Dendritic cell treated with granulocyte-macrophage colony-stimulating factor and Interleukin-4, amounts not matched to agents 40 ng/mL and 50 ng/mL, for 4 days (primary cell): ENCODE measurements at regions of chr2 and their contacts with region 1.

Region 1: GRCh38 chr2:239222312-239222660 is 178.5 kb downstream of the HDAC4 start:
- H3K4me3 Mint-ChIP-seq: peak overlapping the region; percentile 61
- H3K27ac Mint-ChIP-seq: peak overlapping the region; percentile 92
- H3K4me1 Mint-ChIP-seq: peaks cover 86% of the 10 kb centered on the region
- H3K27me3 Mint-ChIP-seq: no peaks in the 10 kb centered on the region

Region 2: DNA sequence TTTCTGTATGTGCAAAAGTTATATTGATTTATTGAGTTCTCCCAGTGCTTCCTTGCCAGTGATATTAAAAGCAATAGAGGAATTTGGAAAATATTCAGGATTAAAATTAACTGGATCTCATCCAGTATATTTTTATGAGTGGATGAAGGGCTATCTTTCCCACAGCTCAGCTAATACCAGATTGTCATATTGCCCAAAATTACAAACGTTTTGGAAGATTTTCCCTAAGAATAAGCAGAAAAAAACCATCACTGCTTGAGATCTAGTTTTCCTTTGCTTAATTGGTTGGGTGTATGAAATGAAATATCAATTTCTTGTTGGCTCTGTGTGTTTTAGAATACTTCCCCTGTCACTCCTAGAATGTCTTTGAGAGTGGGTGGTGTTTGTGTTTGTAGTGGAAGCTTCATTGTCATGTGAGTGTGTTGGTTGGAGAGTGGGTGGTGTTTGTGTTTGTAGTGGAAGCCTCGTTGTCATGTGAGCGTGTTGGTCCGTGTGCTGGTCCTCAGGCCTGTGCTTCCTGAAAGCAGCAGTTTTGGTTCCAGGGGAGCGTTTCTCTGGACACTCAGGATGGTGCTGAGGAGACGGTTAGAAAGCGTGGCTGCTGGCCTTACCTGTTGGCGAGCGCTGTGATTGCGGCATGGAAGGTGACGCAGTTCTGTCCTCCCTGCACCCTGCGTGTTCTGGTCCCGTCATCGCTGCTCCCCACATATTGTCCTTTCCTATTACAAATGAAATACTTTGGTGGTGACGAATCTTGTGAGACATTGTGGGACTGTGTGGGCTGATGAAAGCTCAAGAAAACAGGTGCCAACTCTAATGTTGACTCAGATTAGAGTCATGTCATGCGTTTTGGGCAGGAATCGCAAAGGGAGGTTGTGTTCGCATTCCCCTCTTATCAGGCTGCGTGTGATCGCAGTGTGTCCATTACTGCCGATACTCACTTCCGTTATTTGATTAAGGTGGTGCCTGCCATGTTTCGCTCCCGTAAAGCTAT is 783.1 kb before region 1 on chr2:
- intact Hi-C with region 1: no loop called
- H3K4me3 Mint-ChIP-seq: no peak overlapping the region
- H3K27ac Mint-ChIP-seq: peak overlapping the region; percentile 10
- H3K4me1 Mint-ChIP-seq: peaks cover 38% of the 10 kb centered on the region
- H3K27me3 Mint-ChIP-seq: no peaks in the 10 kb centered on the region

Region 3: DNA sequence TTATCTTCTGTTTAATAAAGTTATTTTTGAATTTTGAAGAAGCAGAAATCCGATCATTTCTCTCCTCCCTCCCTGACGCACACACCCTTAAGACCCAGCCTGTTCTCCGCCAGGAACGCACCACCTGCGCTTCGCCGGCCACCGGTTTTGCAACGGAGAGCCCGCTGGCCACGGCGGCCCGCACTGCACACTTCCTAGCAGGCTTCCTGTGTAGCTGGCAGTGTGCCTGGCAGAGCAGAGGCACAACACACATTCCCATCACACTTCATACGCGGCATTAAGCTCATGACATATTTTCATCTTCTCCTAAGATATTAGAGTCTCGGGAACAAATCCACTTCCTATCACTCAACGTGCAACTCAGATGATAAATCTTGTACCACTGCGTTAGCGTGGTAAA is 30.5 kb after region 1 on chr2:
- intact Hi-C with region 1: loop called (anchors 1 kb)
- H3K4me3 Mint-ChIP-seq: peak overlapping the region; percentile 71
- H3K27ac Mint-ChIP-seq: peak overlapping the region; percentile 88
- H3K4me1 Mint-ChIP-seq: peaks cover 92% of the 10 kb centered on the region
- H3K27me3 Mint-ChIP-seq: no peaks in the 10 kb centered on the region

Region 4: GRCh38 chr2:239339726-239340601 is 117.7 kb after region 1 on chr2:
- intact Hi-C with region 1: no loop called
- H3K4me3 Mint-ChIP-seq: no peak overlapping the region
- H3K27ac Mint-ChIP-seq: peak overlapping the region; percentile 73
- H3K4me1 Mint-ChIP-seq: peaks cover 30% of the 10 kb centered on the region
- H3K27me3 Mint-ChIP-seq: no peaks in the 10 kb centered on the region